Ovary (tissue), 10 donors: ENCODE measurements at regions of chr17 and their contacts with region 1.

Region 1: DNA sequence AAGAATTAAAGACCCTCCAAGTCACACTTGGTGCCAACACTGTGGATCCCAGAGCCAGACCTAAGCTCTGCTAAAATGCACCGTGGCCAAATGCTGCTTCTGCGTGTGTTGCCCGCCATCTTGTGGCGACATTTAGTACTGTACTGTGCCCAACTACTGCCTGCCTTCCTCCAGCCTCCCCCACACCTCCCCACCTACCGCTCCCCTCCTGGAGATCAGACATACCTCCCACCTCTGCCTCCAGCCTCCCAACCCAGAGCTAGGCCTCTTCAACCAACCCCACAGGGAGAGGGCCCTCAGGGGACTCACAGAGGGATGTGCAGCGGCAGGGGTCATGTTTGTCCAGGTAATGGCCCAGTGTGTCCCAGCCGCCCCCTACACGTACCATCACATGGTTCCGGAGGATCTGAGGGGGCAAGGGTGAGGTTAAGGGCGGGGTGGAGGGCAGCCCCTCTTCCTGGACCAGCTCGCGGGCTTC is 5.5 kb downstream of the GAS2L2 start:
- DNase-seq: peak; percentile 68 to 85 (median 79)
- H3K4me3 ChIP-seq: no peak overlapping the region
- H3K27ac ChIP-seq: no peak overlapping the region
- H3K4me1 ChIP-seq: no peaks in the 10 kb centered on the region
- H3K27me3 ChIP-seq: no peaks in the 10 kb centered on the region
- CTCF ChIP-seq: peak; percentile 71 to 81 (median 78)
- EP300 ChIP-seq: no peak
- POLR2A ChIP-seq: no peak

Region 2: GRCh38 chr17:35022536-35023063 is 725.0 kb before region 1 on chr17:
- intact Hi-C with region 1: no loop called
- DNase-seq: peak in 1 of 5 donors; percentile 39
- H3K4me3 ChIP-seq: no peak overlapping the region
- H3K27ac ChIP-seq: no peak overlapping the region
- H3K4me1 ChIP-seq: no peaks in the 10 kb centered on the region
- H3K27me3 ChIP-seq: no peaks in the 10 kb centered on the region
- CTCF ChIP-seq: no peak
- EP300 ChIP-seq: no peak
- POLR2A ChIP-seq: no peak

Region 3: GRCh38 chr17:35312790-35313711 is 434.5 kb before region 1 on chr17:
- intact Hi-C with region 1: loop called (anchors 5 to 10 kb)
- DNase-seq: peak; percentile 25 to 60 (median 40)
- H3K4me3 ChIP-seq: no peak overlapping the region
- H3K27ac ChIP-seq: no peak overlapping the region
- H3K4me1 ChIP-seq: peaks cover 6% of the 10 kb centered on the region
- H3K27me3 ChIP-seq: no peaks in the 10 kb centered on the region
- CTCF ChIP-seq: peak; percentile 66 to 76 (median 72)
- EP300 ChIP-seq: no peak
- POLR2A ChIP-seq: no peak

Region 4: GRCh38 chr17:35423761-35424160 is 323.8 kb before region 1 on chr17:
- intact Hi-C with region 1: loop called in 1 of 4 experiments (anchors 10 kb)
- DNase-seq: no peak
- H3K4me3 ChIP-seq: no peak overlapping the region
- H3K27ac ChIP-seq: no peak overlapping the region
- H3K4me1 ChIP-seq: no peaks in the 10 kb centered on the region
- H3K27me3 ChIP-seq: no peaks in the 10 kb centered on the region
- CTCF ChIP-seq: no peak
- EP300 ChIP-seq: no peak
- POLR2A ChIP-seq: no peak

Region 5: GRCh38 chr17:35540589-35541404 is 206.8 kb before region 1 on chr17:
- intact Hi-C with region 1: loop called in 1 of 4 experiments (anchors 10 kb)
- DNase-seq: peak in 1 of 5 donors; percentile 25
- H3K4me3 ChIP-seq: peak overlapping the region; percentile 22
- H3K27ac ChIP-seq: no peak overlapping the region
- H3K4me1 ChIP-seq: peaks cover 2% of the 10 kb centered on the region
- H3K27me3 ChIP-seq: no peaks in the 10 kb centered on the region
- CTCF ChIP-seq: no peak
- EP300 ChIP-seq: no peak
- POLR2A ChIP-seq: no peak

Region 6: GRCh38 chr17:35560703-35561102 is 186.9 kb before region 1 on chr17 and contains the start of gene SLFN14:
- intact Hi-C with region 1: no loop called
- DNase-seq: no peak
- H3K4me3 ChIP-seq: no peak within 1 kb of the TSS
- H3K27ac ChIP-seq: no peak within 1 kb of the TSS
- H3K4me1 ChIP-seq: no peaks in the 10 kb centered on the region
- H3K27me3 ChIP-seq: no peaks in the 10 kb centered on the region
- CTCF ChIP-seq: no peak
- EP300 ChIP-seq: no peak
- POLR2A ChIP-seq: no peak
- total RNA-seq, gene SLFN14: not detected

Region 7: DNA sequence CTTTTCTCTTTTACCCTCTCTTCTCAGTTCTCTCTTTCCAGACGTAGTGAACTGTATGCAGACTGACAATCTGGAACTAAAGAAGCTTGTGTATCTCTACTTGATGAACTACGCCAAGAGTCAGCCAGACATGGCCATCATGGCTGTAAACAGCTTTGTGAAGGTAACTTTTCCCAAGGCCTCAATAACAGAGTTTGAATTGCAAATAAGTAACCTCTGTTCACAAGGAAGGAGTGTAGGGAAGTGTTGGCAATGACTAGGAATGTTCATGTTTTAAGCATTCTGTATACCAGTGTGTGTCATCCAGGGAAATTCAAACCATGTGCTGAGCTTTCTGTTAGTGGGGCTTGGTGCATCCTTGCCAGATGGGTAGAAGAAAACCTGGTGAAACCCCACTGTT is 141.9 kb before region 1 on chr17:
- intact Hi-C with region 1: loop called (anchors 5 to 10 kb)
- DNase-seq: no peak
- H3K4me3 ChIP-seq: no peak overlapping the region
- H3K27ac ChIP-seq: no peak overlapping the region
- H3K4me1 ChIP-seq: no peaks in the 10 kb centered on the region
- H3K27me3 ChIP-seq: no peaks in the 10 kb centered on the region
- CTCF ChIP-seq: no peak
- EP300 ChIP-seq: no peak
- POLR2A ChIP-seq: no peak

Region 8: DNA sequence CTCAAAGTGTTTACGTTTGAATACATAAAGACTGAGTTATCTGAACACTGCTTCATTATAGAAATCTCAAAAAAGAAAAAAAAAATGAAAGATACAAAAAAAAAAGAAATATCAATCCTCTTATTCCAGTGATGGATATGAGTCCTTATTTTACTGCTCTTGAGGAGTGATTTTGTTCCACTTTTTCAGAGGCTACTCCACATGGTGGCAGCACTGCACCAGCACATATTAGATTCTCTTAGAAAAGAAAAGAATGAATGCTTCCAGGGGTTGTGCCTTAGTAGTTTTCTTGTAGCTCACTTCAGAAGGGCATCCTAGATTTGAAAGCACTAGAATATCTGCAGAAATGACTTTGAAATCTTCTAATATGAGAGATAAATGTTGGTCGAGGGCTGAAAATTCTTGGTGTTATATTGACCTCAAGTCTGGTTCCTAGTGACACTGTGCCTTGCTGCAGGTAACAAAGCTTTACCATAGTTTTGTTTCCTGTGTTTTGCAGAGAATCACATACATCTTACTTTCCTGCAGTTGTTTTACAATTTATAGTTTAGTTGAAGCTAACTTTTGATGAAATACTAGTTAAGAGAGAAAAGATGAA is 134.6 kb before region 1 on chr17:
- intact Hi-C with region 1: loop called (anchors 5 to 10 kb)
- DNase-seq: peak in 2 of 5 donors; percentile 35 to 46
- H3K4me3 ChIP-seq: no peak overlapping the region
- H3K27ac ChIP-seq: no peak overlapping the region
- H3K4me1 ChIP-seq: no peaks in the 10 kb centered on the region
- H3K27me3 ChIP-seq: no peaks in the 10 kb centered on the region
- CTCF ChIP-seq: no peak
- EP300 ChIP-seq: no peak
- POLR2A ChIP-seq: no peak

Region 9: GRCh38 chr17:35660902-35661301 is 86.7 kb before region 1 on chr17:
- intact Hi-C with region 1: no loop called
- DNase-seq: no peak
- H3K4me3 ChIP-seq: no peak overlapping the region
- H3K27ac ChIP-seq: no peak overlapping the region
- H3K4me1 ChIP-seq: no peaks in the 10 kb centered on the region
- H3K27me3 ChIP-seq: no peaks in the 10 kb centered on the region
- CTCF ChIP-seq: no peak
- EP300 ChIP-seq: no peak
- POLR2A ChIP-seq: no peak